K562 (cell line): ENCODE measurements at regions of chr2 and their contacts with region 1.

Region 1: GRCh38 chr2:236343400-236344161 is 79.4 kb upstream of the ASB18 start:
- DNase-seq: peak; percentile 37 to 57 (median 52)
- ATAC-seq: peak; percentile 55; the same call in 1 of the 3 replicates
- H3K4me3 ChIP-seq: no peak overlapping the region
- H3K27ac ChIP-seq: no peak overlapping the region
- H3K4me1 ChIP-seq: no peaks in the 10 kb centered on the region
- H3K27me3 ChIP-seq: peaks cover 0 to 29% of the 10 kb centered on the region in 2 experiments; a peak in 2 of 5 replicates
- CTCF ChIP-seq: peak; percentile 48 to 70 (median 60); a peak in 5 of 6 replicates
- EP300 ChIP-seq: no peak
- POLR2A ChIP-seq: no peak
- RAD21 ChIP-seq: peak; percentile 15 to 35; a peak in 1 of 4 replicates

Region 2: DNA sequence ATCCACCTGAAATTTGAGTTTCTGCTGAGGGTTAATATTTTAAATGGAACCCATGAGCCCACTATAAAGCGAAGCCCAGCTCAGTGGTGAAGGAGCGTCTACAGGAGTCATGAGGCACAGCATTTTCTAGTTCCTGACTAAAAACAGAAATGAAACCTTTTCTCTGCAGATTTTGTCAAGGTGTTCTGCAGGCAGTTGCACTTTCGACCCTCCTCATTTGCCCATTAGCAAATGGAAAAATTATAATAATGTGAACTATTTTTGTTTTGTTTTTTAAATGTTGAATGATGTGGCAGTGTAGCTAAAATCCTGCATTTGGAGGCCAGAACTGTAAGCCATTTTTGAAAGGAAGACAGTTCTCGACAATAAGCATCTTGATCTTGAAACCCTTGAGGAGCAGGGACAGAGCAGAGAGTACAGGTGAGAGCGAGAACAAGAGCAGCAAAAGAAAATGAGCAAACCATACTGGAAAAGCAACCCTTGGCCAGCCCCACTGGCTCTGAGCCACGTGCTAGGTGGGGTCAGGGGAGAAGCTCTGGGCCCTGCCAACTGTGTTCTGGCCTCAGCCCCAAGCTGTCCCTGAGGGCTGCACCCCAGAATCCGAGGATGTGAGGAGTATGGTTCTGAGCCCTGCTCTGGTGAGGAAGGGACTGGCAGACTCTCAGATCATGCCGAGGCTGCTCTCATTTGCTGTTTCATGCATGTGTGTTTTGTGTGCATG is 715.7 kb after region 1 on chr2:
- CTCF ChIA-PET with region 1: no interaction called
- POLR2A ChIA-PET with region 1: no interaction called
- in situ Hi-C with region 1: loop called (anchors 10 kb)
- intact Hi-C with region 1: no loop called
- DNase-seq: no peak
- ATAC-seq: no peak
- H3K4me3 ChIP-seq: no peak overlapping the region
- H3K27ac ChIP-seq: no peak overlapping the region
- H3K4me1 ChIP-seq: no peaks in the 10 kb centered on the region
- H3K27me3 ChIP-seq: peaks cover 0 to 43% of the 10 kb centered on the region in 2 experiments; a peak in 4 of 5 replicates
- CTCF ChIP-seq: no peak
- EP300 ChIP-seq: no peak
- POLR2A ChIP-seq: no peak
- RAD21 ChIP-seq: no peak